ENCODE measurements at regions of chr5 and their contacts with region 1.

Region 1: GRCh38 chr5:106269252-106269843 is 1401.4 kb downstream of the EFNA5 start:
- DNase-seq: peak; percentile 65
- ATAC-seq: peak; percentile 75
- H3K4me3 ChIP-seq: no peak overlapping the region
- H3K27ac ChIP-seq: no peak overlapping the region
- H3K4me1 ChIP-seq: no peaks in the 10 kb centered on the region
- H3K27me3 ChIP-seq: no peaks in the 10 kb centered on the region
- CTCF ChIP-seq: peak; percentile 79

Region 2: DNA sequence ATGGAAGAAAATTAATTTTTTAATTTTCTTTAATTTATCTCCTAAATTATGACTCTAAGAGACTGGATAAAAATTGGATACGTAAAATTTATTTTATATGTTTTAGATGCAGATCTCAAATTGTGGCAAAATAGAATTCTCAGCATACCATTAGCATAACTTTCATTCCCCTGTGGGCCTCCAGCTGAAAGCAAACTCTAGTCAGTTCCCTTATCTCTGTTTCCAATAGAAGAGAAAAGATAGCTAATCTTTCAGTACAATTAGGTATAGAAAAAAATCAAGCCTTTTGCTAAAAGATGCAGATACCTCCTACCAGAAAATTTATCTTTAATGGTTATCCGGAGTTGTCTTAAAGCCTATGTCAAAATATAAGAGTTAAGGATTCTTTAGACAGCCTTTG is 129.2 kb before region 1 on chr5:
- CTCF ChIA-PET with region 1: no interaction called
- POLR2A ChIA-PET with region 1: no interaction called
- intact Hi-C with region 1: no loop called
- DNase-seq: no peak
- ATAC-seq: no peak
- H3K4me3 ChIP-seq: no peak overlapping the region
- H3K27ac ChIP-seq: no peak overlapping the region
- H3K4me1 ChIP-seq: no peaks in the 10 kb centered on the region
- H3K27me3 ChIP-seq: no peaks in the 10 kb centered on the region
- CTCF ChIP-seq: no peak

Region 3: GRCh38 chr5:106397700-106398099 is 128.4 kb after region 1 on chr5:
- CTCF ChIA-PET with region 1: no interaction called
- POLR2A ChIA-PET with region 1: no interaction called
- intact Hi-C with region 1: loop called (anchors 5 kb)
- DNase-seq: peak; percentile 95
- ATAC-seq: peak; percentile 92
- H3K4me3 ChIP-seq: no peak overlapping the region
- H3K27ac ChIP-seq: peak overlapping the region; percentile 84
- H3K4me1 ChIP-seq: peaks cover 57% of the 10 kb centered on the region
- H3K27me3 ChIP-seq: no peaks in the 10 kb centered on the region
- CTCF ChIP-seq: no peak

Region 4: DNA sequence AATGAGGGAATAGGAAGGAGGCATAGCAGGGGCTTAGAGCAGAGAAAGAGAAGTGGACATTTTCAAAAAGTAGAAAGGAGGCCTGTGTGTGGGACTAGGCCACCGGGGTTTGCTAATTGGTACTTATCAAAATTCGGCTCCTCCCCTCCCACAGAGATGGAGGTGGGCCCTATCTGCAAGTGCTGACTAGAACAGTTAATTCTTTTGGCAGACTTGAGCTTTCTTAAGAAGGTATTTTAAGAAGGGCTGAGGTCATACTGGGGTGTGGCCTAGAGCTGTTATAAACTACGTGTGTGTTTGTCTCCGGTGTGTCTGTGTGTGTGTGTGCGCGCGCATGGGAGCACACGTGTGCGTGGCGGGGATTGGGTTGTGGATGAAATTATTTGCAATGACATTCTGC is 314.9 kb after region 1 on chr5:
- CTCF ChIA-PET with region 1: no interaction called
- POLR2A ChIA-PET with region 1: no interaction called
- intact Hi-C with region 1: no loop called
- DNase-seq: no peak
- ATAC-seq: no peak
- H3K4me3 ChIP-seq: no peak overlapping the region
- H3K27ac ChIP-seq: no peak overlapping the region
- H3K4me1 ChIP-seq: no peaks in the 10 kb centered on the region
- H3K27me3 ChIP-seq: no peaks in the 10 kb centered on the region
- CTCF ChIP-seq: no peak

Region 5: DNA sequence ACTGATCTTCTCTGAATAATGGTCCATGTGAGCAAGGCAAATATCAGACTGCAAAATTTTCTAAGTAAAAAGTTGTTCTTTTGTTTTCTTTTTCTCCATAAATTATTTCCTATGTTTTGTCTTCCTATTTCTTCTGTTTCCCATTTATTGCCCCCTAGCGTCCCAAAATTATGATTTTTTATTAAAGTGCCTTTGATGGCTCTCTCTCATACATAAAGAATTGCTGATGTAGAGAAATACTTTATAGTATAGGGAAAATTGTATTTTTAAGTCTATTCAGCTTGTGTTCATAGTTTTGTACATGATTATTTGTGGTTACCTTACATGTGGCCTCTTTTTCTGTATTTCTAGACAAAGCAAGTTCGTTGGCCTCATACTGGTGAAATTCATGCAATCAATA is 370.1 kb after region 1 on chr5:
- CTCF ChIA-PET with region 1: no interaction called
- POLR2A ChIA-PET with region 1: no interaction called
- intact Hi-C with region 1: loop called (anchors 10 kb)
- DNase-seq: peak; percentile 35
- ATAC-seq: no peak
- H3K4me3 ChIP-seq: no peak overlapping the region
- H3K27ac ChIP-seq: no peak overlapping the region
- H3K4me1 ChIP-seq: peaks cover 8% of the 10 kb centered on the region
- H3K27me3 ChIP-seq: no peaks in the 10 kb centered on the region
- CTCF ChIP-seq: peak; percentile 54

Region 6: GRCh38 chr5:106749826-106750225 is 480.5 kb after region 1 on chr5:
- CTCF ChIA-PET with region 1: no interaction called
- POLR2A ChIA-PET with region 1: no interaction called
- intact Hi-C with region 1: loop called (anchors 2 kb)
- DNase-seq: no peak
- ATAC-seq: no peak
- H3K4me3 ChIP-seq: no peak overlapping the region
- H3K27ac ChIP-seq: no peak overlapping the region
- H3K4me1 ChIP-seq: no peaks in the 10 kb centered on the region
- H3K27me3 ChIP-seq: no peaks in the 10 kb centered on the region
- CTCF ChIP-seq: no peak

Region 7: GRCh38 chr5:106875591-106876297 is 606.4 kb after region 1 on chr5:
- CTCF ChIA-PET with region 1: no interaction called
- POLR2A ChIA-PET with region 1: no interaction called
- intact Hi-C with region 1: loop called (anchors 1 kb)
- DNase-seq: peak; percentile 90
- ATAC-seq: peak; percentile 66
- H3K4me3 ChIP-seq: no peak overlapping the region
- H3K27ac ChIP-seq: no peak overlapping the region
- H3K4me1 ChIP-seq: peaks cover 8% of the 10 kb centered on the region
- H3K27me3 ChIP-seq: no peaks in the 10 kb centered on the region
- CTCF ChIP-seq: peak; percentile 83

Region 8: GRCh38 chr5:107425541-107426256 is 1156.4 kb after region 1 on chr5:
- CTCF ChIA-PET with region 1: interaction called, 11 read pairs
- POLR2A ChIA-PET with region 1: no interaction called
- intact Hi-C with region 1: no loop called
- DNase-seq: peak; percentile 83
- ATAC-seq: peak; percentile 86
- H3K4me3 ChIP-seq: peak overlapping the region; percentile 38; the same call in 1 of the 2 replicates
- H3K27ac ChIP-seq: peak overlapping the region; percentile 89
- H3K4me1 ChIP-seq: peaks cover 40% of the 10 kb centered on the region
- H3K27me3 ChIP-seq: no peaks in the 10 kb centered on the region
- CTCF ChIP-seq: no peak